Activated CD4-positive, alpha-beta memory T cell treated with anti-CD3 and anti-CD28 coated beads for 36 hours (primary cell): ENCODE measurements at regions of chr11 and their contacts with region 1.

Region 1: DNA sequence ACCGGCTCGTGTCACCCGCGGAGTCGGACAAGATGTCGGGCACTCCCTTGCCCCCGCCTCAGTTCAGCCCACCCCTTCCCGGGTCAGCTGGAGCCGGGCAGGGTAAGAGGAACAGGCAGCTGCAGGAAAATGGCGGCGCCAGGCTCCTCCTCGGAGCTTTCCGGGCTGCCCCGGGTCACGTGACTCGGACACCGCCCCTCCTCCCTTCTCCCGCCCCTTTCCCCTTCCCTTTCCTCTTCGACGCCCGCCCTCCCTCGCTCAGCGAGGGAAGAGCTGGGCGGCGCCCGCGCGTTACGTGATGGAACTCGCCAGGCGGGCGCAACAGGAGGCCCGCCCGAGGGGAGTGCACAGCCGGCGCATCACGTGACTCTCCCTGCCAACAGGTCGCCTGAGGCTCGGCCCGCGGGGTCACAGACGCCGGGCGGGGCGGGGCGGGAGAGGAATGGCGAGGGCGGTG is at the start of gene PICALM:
- DNase-seq: peak; percentile 99
- H3K4me3 Mint-ChIP-seq: peak within 1 kb of the TSS; percentile 96
- H3K27ac Mint-ChIP-seq: peak within 1 kb of the TSS; percentile 88
- H3K4me1 Mint-ChIP-seq: peaks cover 25% of the 10 kb centered on the region
- H3K27me3 Mint-ChIP-seq: no peaks in the 10 kb centered on the region
- total RNA-seq, gene PICALM: 75.9 to 90.4 TPM

Region 2: GRCh38 chr11:86041975-86042378 is 27.0 kb before region 1 on chr11:
- CTCF ChIA-PET with region 1: interaction called, 20 read pairs
- POLR2A ChIA-PET with region 1: interaction called, 11 read pairs
- intact Hi-C with region 1: loop called (anchors 1 kb)
- DNase-seq: peak; percentile 48
- H3K4me3 Mint-ChIP-seq: no peak overlapping the region
- H3K27ac Mint-ChIP-seq: peak overlapping the region; percentile 58
- H3K4me1 Mint-ChIP-seq: peaks cover 71% of the 10 kb centered on the region
- H3K27me3 Mint-ChIP-seq: no peaks in the 10 kb centered on the region

Region 3: DNA sequence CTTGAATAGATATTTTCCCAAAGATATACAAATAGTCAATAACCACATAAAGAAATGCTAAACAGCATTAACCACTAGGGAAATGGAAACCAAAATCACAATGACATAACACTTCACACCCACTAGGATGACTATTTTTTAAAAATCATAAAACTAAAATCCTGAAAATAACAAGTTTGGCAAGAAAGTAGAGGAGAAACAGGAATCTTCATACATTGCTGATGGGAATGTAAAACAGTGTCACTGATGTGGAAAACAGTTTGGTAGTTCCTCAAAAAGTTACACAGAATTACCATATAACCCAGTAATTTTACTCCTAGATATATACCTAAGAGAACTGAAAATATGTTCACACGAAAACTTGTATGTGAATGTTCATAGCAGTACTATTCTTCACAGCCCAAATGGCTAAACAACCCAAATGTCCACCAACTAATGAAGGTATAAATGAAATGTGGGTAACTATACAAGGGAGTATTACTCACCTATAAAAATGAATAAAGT is 12.6 kb before region 1 on chr11:
- CTCF ChIA-PET with region 1: interaction called, 8 read pairs
- POLR2A ChIA-PET with region 1: interaction called, 5 read pairs
- intact Hi-C with region 1: loop called (anchors 1 kb)
- DNase-seq: no peak
- H3K4me3 Mint-ChIP-seq: no peak overlapping the region
- H3K27ac Mint-ChIP-seq: peak overlapping the region; percentile 20
- H3K4me1 Mint-ChIP-seq: peaks cover 92% of the 10 kb centered on the region
- H3K27me3 Mint-ChIP-seq: no peaks in the 10 kb centered on the region

Region 4: GRCh38 chr11:86116386-86116726 is 47.4 kb after region 1 on chr11:
- CTCF ChIA-PET with region 1: interaction called, 4 read pairs
- POLR2A ChIA-PET with region 1: interaction called, 7 read pairs
- intact Hi-C with region 1: loop called (anchors 5 kb)
- DNase-seq: peak; percentile 59
- H3K4me3 Mint-ChIP-seq: peak overlapping the region; percentile 40
- H3K27ac Mint-ChIP-seq: peak overlapping the region; percentile 44
- H3K4me1 Mint-ChIP-seq: peaks cover 34% of the 10 kb centered on the region
- H3K27me3 Mint-ChIP-seq: peaks cover 2% of the 10 kb centered on the region

Region 5: GRCh38 chr11:86138958-86139357 is 70.0 kb after region 1 on chr11:
- CTCF ChIA-PET with region 1: no interaction called
- POLR2A ChIA-PET with region 1: no interaction called
- intact Hi-C with region 1: loop called (anchors 1 kb)
- DNase-seq: peak; percentile 61
- H3K4me3 Mint-ChIP-seq: peak overlapping the region; percentile 20
- H3K27ac Mint-ChIP-seq: peak overlapping the region; percentile 70
- H3K4me1 Mint-ChIP-seq: peaks cover 45% of the 10 kb centered on the region
- H3K27me3 Mint-ChIP-seq: no peaks in the 10 kb centered on the region

Region 6: DNA sequence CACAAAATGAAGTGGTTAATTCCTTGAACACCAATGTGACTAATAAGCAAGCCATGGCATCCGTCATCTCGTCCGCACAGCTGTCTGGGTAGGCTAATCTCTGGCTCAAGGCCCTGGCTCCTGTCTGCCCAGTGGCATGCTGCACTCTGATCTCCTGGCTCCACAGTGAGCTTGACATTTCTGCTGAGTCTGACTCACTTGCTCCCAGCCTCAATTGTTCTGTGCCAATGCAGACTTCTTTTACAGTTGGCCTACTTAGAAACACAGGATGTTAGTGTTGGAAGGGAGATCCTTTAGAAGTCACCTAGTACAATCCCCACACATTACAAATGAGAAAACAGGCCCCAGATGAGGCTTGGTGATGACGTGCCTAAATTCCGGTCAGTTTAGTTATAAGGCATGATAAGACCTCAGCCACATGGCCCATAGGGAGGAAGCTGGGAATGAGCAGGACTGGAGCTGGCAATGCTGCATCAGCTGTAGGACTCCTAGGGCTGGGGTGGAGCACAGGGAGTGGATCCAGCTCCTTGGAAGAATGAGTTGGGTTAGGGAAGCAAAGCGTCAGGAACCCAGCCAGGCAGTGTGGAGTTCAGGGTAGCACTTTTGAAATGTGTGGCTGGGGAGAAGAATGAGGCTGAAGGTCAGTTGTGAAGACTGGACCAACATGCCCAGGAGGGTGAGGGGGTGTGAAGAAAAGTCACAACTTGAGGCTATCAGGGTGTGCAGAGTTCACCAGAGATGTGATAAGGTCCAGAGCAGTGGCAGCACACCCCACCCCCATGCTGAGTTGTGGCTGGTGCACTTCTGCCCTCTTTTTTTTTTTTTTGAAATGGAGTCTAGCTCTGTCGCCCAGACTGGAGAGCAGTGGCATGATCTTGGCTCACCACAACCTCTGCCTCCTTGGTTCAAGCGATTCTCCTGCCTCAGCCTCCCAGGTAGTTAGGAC is 105.4 kb after region 1 on chr11:
- CTCF ChIA-PET with region 1: interaction called, 4 read pairs
- POLR2A ChIA-PET with region 1: interaction called, 16 read pairs
- intact Hi-C with region 1: loop called (anchors 1 kb)
- DNase-seq: peak; percentile 36
- H3K4me3 Mint-ChIP-seq: no peak overlapping the region
- H3K27ac Mint-ChIP-seq: no peak overlapping the region
- H3K4me1 Mint-ChIP-seq: peaks cover 28% of the 10 kb centered on the region
- H3K27me3 Mint-ChIP-seq: no peaks in the 10 kb centered on the region

Region 7: DNA sequence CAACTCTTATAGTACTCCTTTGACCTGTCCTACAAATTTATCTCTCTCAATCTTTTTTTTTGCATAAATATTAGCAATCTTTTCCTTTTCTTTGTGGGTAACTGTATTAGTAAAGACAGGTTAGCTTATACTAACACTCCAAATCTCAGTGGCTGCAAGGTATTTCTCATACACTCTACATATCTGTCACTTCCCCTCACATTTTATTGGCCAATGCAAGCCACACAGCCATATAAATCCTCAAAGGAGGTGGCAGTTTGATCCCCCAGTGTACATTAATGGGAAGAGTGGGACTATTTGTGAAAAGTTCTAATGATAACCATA is 133.0 kb after region 1 on chr11:
- CTCF ChIA-PET with region 1: interaction called, 8 read pairs
- POLR2A ChIA-PET with region 1: interaction called, 4 read pairs
- intact Hi-C with region 1: loop called (anchors 1 kb)
- DNase-seq: peak; percentile 38
- H3K4me3 Mint-ChIP-seq: no peak overlapping the region
- H3K27ac Mint-ChIP-seq: no peak overlapping the region
- H3K4me1 Mint-ChIP-seq: peaks cover 5% of the 10 kb centered on the region
- H3K27me3 Mint-ChIP-seq: no peaks in the 10 kb centered on the region